GM12878 (cell line): ENCODE measurements at regions of chr2 and their contacts with region 1.

Region 1: GRCh38 chr2:24360050-24360962 is at the start of gene ITSN2:
- DNase-seq: peak; percentile 68
- ATAC-seq: peak; percentile 90
- H3K4me3 ChIP-seq: peak within 1 kb of the TSS; percentile 79
- H3K27ac ChIP-seq: peak within 1 kb of the TSS; percentile 93
- H3K4me1 ChIP-seq: peaks cover 10% of the 10 kb centered on the region
- H3K27me3 ChIP-seq: no peaks in the 10 kb centered on the region
- CTCF ChIP-seq: no peak
- EP300 ChIP-seq: no peak
- POLR2A ChIP-seq: peak; percentile 89
- RAD21 ChIP-seq: no peak
- polyA plus RNA-seq, gene ITSN2: 20.5 to 24.3 TPM

Region 2: GRCh38 chr2:23384551-23385349 is 975.6 kb before region 1 on chr2 and contains the start of gene KLHL29:
- CTCF ChIA-PET with region 1: no interaction called
- POLR2A ChIA-PET with region 1: no interaction called
- RAD21 ChIA-PET with region 1: no interaction called
- SMC1A ChIA-PET with region 1: no interaction called
- in situ Hi-C with region 1: loop called (anchors 25 kb)
- intact Hi-C with region 1: no loop called
- DNase-seq: no peak
- ATAC-seq: peak; percentile 46
- H3K4me3 ChIP-seq: peak within 1 kb of the TSS; percentile 81
- H3K27ac ChIP-seq: no peak within 1 kb of the TSS
- H3K4me1 ChIP-seq: peaks cover 18% of the 10 kb centered on the region
- H3K27me3 ChIP-seq: no peaks in the 10 kb centered on the region
- CTCF ChIP-seq: no peak
- EP300 ChIP-seq: no peak
- POLR2A ChIP-seq: peak; percentile 91
- RAD21 ChIP-seq: no peak
- polyA plus RNA-seq, gene KLHL29: 1.4 to 2.2 TPM

Region 3: DNA sequence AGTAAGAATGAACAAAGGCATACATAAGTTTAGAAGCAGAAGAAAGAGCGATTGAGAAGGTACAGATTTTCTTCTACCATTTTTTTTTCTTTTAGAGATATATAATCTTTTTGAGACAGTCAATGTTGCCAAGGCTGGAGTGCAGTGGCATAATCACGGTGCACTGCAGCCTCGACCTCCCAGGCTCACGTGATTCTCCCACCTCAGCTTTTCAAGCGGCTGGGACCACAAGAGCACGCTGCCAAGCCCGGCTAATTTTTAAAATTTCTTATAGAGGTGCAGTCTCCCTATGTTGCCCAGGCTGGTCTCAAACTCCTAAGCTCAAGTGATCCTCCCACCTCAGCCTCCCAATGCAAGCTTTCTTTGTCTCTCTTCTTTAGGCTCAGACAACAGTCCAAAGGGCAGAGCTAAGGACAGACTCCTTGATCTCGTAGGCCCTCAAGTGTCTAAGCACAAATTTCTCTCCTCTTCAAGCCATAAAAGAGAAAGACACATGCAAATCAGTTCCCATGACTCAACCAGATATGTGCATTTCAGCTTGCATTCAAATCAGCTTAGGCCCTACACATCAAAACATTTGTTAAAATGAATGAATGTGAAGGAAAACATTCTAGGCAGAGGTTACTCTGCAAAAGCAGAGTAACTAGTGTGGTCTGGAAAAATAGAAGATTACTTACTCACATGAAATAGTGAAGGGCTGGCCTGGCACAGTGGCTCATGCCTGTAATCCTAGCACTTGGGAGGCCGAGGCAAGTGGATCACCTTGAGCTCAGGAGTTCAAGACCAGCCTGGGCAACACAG is 18.0 kb before region 1 on chr2:
- CTCF ChIA-PET with region 1: interaction called, 44 read pairs
- POLR2A ChIA-PET with region 1: interaction called, 36 read pairs
- RAD21 ChIA-PET with region 1: interaction called, 19 read pairs
- SMC1A ChIA-PET with region 1: interaction called, 44 read pairs
- in situ Hi-C with region 1: no loop called
- intact Hi-C with region 1: loop called (anchors 2 kb)
- DNase-seq: peak; percentile 68
- ATAC-seq: peak; percentile 81
- H3K4me3 ChIP-seq: peak overlapping the region; percentile 9; the same call in 1 of the 2 replicates
- H3K27ac ChIP-seq: peak overlapping the region; percentile 71
- H3K4me1 ChIP-seq: peaks cover 40% of the 10 kb centered on the region
- H3K27me3 ChIP-seq: no peaks in the 10 kb centered on the region
- CTCF ChIP-seq: peak in 2 of 3 experiments; percentile 12 to 40; a peak in 2 of 6 replicates
- EP300 ChIP-seq: peak in 1 of 2 experiments; percentile 22; a peak in 1 of 4 replicates
- POLR2A ChIP-seq: peak; percentile 50; the same call in 1 of the 2 replicates
- RAD21 ChIP-seq: peak; percentile 47; the same call in 1 of the 2 replicates